ENCODE measurements at regions of chr17 and their contacts with region 1.

Region 1: DNA sequence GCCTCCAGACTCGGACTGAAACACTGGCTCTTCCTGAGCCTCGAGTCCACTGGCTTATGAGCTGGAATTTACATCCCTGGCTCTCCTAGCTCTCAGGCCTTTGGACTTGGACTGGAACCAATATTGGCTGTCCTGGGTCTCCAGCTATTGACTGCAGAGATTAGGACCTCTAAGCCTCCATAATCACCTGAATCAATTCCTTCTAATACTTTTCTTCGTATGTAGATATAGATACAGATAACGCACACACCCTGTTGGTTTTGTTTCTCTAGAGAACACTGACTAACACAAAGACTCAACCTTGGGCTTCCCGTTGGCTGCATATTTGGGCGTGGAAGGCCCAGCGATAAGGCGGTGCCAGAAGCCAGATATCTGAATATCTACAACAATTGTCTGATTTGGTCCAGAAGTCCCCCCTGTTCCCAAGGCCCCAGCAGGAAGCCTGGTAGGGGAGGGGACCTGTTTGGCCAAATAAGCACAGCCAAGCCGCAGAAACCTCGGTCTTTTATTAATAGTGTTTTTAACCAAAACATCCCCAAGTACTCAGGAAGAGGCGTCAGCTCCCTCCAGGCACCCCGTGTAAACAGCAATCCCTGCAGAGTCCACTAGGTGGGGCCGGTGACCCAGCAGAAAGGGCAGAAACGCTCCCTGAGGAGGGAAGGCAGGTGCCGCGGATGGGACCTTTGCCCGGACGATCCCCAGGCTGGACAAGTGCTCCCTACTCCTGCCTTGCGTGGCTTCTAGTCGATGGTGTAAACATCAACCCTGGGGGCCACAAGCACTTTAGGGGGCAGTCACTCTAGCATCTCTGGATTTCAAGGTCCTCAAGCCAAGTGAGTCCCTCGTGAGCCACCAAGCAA is 57.0 kb downstream of the ABR start:
- DNase-seq: peak; percentile 77

Region 2: GRCh38 chr17:1067282-1067956 is 55.3 kb before region 1 on chr17:
- CTCF ChIA-PET with region 1: no interaction called
- POLR2A ChIA-PET with region 1: no interaction called
- DNase-seq: no peak

Region 3: GRCh38 chr17:1147661-1148060 is 24.9 kb after region 1 on chr17:
- CTCF ChIA-PET with region 1: interaction called, 15 read pairs
- POLR2A ChIA-PET with region 1: interaction called, 5 read pairs
- DNase-seq: peak; percentile 74

Region 4: GRCh38 chr17:1186923-1187771 is 64.4 kb after region 1 on chr17:
- CTCF ChIA-PET with region 1: interaction called, 20 read pairs
- POLR2A ChIA-PET with region 1: no interaction called
- DNase-seq: peak; percentile 92

Measured in HEK293T (cell line).